T-cell (primary cell): ENCODE measurements at regions of chr19 and their contacts with region 1.

Region 1: DNA sequence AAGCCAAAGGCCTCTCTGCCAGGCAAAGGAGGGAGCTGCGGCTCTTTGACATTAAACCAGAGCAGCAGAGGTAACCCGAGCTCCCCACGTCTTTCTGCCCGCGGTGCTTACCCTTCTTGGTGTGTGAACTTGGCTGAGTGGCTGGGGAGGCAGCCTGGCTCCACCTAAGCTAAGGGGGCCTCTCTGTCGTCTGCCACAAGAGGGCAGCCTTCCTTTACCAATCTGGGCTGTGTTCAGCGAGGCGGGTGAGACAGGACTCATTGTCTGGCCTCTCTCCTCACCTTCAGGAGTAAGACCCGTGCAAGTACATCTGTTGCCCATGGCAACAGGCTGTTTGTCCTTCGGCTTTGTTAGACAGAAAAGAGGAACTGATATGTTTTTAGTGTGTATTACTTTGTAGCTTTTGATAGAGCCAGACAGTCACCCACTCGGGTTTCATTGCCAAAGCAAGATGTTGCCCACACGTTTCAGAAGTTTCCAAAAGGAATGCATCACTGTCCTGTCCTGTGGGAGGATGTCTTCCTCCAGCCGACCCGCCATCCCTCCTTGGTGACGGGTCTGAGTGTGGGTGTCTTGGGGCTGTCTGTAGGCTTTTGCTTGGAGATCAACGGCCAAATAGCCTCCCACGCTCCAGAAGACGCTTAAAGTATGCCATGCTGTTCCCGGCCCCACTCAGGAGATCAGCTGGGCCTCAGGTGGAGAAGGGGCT is 4.6 kb downstream of the POP4 start:
- DNase-seq: peak; percentile 65 to 92 (median 80)
- ATAC-seq: peak; percentile 56 to 62 (median 58)
- H3K4me3 ChIP-seq: no peak overlapping the region
- H3K4me3 Mint-ChIP-seq: no peak overlapping the region
- H3K27ac ChIP-seq: peak overlapping the region; percentile 31
- H3K27ac Mint-ChIP-seq: peak overlapping the region; percentile 31 to 59
- H3K4me1 ChIP-seq: peaks cover 7 to 32% of the 10 kb centered on the region in 2 experiments
- H3K4me1 Mint-ChIP-seq: peaks cover 21 to 37% (median 34%) of the 10 kb centered on the region in 3 donors
- H3K27me3 ChIP-seq: no peaks in the 10 kb centered on the region
- H3K27me3 Mint-ChIP-seq: no peaks in the 10 kb centered on the region

Region 2: GRCh38 chr19:29404951-29405727 is 205.6 kb before region 1 on chr19:
- CTCF ChIA-PET with region 1: no interaction called
- POLR2A ChIA-PET with region 1: no interaction called
- DNase-seq: no peak
- ATAC-seq: no peak
- H3K4me3 ChIP-seq: no peak overlapping the region
- H3K4me3 Mint-ChIP-seq: no peak overlapping the region
- H3K27ac ChIP-seq: no peak overlapping the region
- H3K27ac Mint-ChIP-seq: no peak overlapping the region
- H3K4me1 ChIP-seq: no peaks in the 10 kb centered on the region
- H3K4me1 Mint-ChIP-seq: no peaks in the 10 kb centered on the region
- H3K27me3 ChIP-seq: peaks cover 0 to 50% of the 10 kb centered on the region in 2 experiments
- H3K27me3 Mint-ChIP-seq: peaks cover 4 to 6% of the 10 kb centered on the region in 2 donors

Region 3: DNA sequence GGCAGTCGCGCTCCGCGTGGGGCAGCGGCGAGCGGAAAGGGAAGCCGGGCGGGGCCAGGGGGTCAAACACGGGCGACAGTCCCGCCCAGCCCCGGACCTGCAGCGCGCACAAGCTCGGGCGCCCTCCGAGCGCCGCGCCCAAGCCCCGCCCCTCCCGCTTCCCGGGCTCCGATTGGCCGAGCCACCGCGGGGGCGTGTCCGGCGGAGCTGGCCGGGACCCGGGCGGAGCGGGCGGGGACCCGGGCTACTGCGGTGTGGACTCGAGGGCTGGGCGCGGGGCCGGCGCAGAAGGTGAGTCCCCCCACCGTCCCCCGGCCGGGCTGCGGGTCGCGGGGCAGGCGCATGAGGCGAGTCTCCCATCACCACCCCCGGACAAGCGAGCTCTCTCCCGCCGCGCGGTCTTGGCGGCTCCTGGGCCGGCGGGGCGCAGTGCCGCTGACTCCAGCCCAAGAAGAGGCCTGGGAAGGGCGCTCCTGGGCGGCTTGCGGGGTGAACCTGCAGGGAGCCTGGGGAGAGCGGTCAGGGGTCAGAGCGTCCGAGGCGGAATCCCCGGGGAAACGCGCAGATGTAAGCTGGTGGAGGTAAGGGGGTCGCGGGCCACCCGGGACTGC is 54.6 kb after region 1 on chr19 and contains the start of gene PLEKHF1:
- CTCF ChIA-PET with region 1: interaction called, 18 to 42 read pairs
- POLR2A ChIA-PET with region 1: interaction called, 4 read pairs
- DNase-seq: peak; percentile 36 to 87 (median 63)
- ATAC-seq: peak; percentile 77 to 80 (median 78)
- H3K4me3 ChIP-seq: peak within 1 kb of the TSS; percentile 90 to 98
- H3K4me3 Mint-ChIP-seq: peak within 1 kb of the TSS; percentile 88 to 93 (median 89)
- H3K27ac ChIP-seq: peak within 1 kb of the TSS; percentile 97
- H3K27ac Mint-ChIP-seq: peak within 1 kb of the TSS; percentile 95 to 97
- H3K4me1 ChIP-seq: peaks cover 39 to 70% of the 10 kb centered on the region in 2 experiments
- H3K4me1 Mint-ChIP-seq: peaks cover 60 to 71% (median 67%) of the 10 kb centered on the region in 3 donors
- H3K27me3 ChIP-seq: no peaks in the 10 kb centered on the region
- H3K27me3 Mint-ChIP-seq: no peaks in the 10 kb centered on the region
- total RNA-seq, gene PLEKHF1: 13.2 to 42.6 (median 34.5) TPM

Region 4: DNA sequence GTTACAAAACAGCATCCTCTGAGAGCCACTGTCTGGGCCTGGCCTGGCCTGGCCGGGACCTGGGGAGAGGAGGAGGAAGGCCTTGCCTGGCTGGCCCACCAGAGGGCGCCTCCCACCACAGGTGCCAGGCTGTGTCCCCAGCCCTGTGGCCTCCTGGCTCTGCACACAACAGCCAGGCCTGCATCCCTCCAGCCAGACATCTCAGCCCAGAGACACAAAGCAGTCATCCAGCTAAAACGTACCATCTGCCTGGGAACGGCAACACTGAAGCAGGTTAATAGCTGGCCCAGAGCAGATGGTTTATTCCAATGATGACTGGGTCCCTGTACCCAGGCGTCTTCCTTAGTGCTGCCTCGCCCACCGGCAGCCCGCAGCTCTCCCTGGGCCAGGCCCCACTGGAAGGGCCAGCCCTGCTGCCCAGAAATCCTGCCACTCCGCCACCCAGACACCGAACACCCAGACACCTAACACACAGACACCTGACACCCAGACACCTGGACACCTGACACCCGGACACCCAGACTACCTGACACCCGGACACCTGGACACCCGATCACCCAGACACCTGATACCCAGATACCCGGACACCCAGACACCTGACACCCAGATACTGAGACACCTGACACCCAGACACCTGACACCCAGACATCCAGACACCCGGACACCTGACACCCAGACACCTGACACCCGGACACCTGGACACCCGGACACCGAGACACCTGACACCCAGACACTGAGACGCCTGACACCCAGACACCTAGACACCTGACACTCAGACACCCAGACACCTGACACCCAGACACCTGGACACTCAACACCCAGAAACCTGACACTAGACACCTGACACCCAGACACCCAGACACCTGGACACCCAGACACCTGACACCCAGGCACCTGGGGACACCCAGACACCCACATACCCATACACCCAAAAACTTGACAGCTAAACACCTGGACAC is 84.2 kb after region 1 on chr19:
- CTCF ChIA-PET with region 1: interaction called, 10 to 30 read pairs
- POLR2A ChIA-PET with region 1: interaction called in 1 of 2 experiments, 3 read pairs
- DNase-seq: peak; percentile 45 to 90 (median 78)
- ATAC-seq: peak; percentile 96 to 97 (median 97)
- H3K4me3 ChIP-seq: no peak overlapping the region
- H3K4me3 Mint-ChIP-seq: peak overlapping the region in 1 of 3 donors; percentile 23
- H3K27ac ChIP-seq: no peak overlapping the region
- H3K27ac Mint-ChIP-seq: peak overlapping the region; percentile 47 to 58
- H3K4me1 ChIP-seq: peaks cover 0 to 32% of the 10 kb centered on the region in 2 experiments
- H3K4me1 Mint-ChIP-seq: peaks cover 13 to 30% (median 25%) of the 10 kb centered on the region in 3 donors
- H3K27me3 ChIP-seq: no peaks in the 10 kb centered on the region
- H3K27me3 Mint-ChIP-seq: no peaks in the 10 kb centered on the region

Region 5: GRCh38 chr19:29844891-29845572 is 234.3 kb after region 1 on chr19:
- CTCF ChIA-PET with region 1: no interaction called
- POLR2A ChIA-PET with region 1: interaction called in 1 of 2 experiments, 10 read pairs
- DNase-seq: peak; percentile 92 to 98 (median 96)
- ATAC-seq: peak; percentile 80 to 82 (median 80)
- H3K4me3 ChIP-seq: peak overlapping the region; percentile 82 to 89
- H3K4me3 Mint-ChIP-seq: peak overlapping the region; percentile 86 to 99 (median 96)
- H3K27ac ChIP-seq: peak overlapping the region; percentile 67
- H3K27ac Mint-ChIP-seq: peak overlapping the region; percentile 85 to 95
- H3K4me1 ChIP-seq: peaks cover 7 to 24% of the 10 kb centered on the region in 2 experiments
- H3K4me1 Mint-ChIP-seq: peaks cover 12 to 18% (median 13%) of the 10 kb centered on the region in 3 donors
- H3K27me3 ChIP-seq: peaks cover 0 to 29% of the 10 kb centered on the region in 2 experiments
- H3K27me3 Mint-ChIP-seq: no peaks in the 10 kb centered on the region